GM18951 (cell line): ENCODE measurements at regions of chr9 and their contacts with region 1.

Region 1: DNA sequence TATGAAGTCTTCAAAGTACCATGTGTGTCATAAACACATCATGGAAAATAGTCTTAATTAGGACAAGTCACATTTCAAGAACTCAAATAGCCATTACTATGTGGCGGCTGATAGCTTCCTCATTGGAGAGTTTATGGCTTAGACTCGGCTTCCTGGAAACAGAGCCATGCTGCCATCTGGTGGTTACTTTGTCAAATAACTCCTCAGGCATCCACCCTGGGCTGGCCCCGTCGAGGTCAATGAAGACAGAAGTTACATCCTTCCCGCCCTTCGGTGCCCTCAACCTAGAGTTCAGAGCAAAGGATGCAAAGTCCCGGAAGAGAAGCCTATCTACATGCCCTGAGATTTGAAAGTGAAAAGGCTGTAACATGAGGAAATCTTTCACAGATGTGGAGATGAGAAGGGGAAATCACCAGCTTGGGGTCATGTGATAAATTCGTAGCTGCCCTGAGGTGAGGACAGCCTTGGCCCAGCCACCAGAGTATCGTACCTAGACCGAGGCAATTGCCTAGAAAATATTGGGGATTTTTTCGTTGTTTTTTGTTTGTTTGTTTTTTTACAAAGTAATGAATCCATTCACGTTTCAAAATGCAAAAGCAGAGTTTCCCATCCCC is 45.5 kb upstream of the ZNF169 start:
- POLR2A ChIP-seq: no peak

Region 2: DNA sequence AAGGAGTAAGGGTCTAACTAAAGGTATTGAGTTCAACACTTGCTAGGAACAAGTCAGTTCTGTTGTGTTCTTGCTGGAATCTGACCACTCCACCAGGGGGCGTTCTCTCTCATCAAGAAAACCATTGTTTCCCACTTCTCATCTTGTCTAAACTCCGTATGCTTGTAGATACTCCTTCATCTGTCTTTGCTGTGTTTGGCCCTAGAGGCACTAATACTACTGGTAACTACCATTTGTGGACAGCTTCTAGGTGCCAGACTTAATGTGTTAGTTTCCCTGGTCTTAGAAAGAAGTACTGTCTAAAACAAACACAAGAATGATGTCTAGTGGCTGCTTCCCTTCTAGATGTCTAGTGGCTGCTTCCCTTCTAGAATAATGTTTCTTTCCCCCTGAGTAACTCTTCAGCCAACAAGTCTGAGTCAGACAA is 148.1 kb before region 1 on chr9:
- in situ Hi-C with region 1: loop called (anchors 5 kb)
- POLR2A ChIP-seq: no peak

Region 3: DNA sequence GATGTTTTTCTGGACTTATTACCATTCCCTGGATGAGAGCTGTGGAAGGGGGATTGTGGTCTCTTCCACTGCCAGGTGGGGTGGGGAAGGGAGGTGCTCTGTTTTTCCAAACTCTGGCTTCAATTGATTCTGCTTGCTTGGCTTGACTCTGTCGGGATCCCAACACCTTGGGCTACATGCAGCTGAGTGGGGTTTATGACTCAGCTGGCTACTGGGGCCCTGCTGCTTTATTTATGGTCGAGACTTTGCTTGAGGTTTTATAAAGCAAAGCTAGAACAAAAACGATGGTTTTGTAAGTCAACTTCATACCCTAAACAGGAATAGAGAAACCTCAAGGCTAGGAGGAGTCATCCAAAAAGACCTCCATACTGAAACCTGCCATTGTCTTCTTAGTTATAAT is 589.2 kb after region 1 on chr9:
- in situ Hi-C with region 1: no loop called
- POLR2A ChIP-seq: no peak